Ascending aorta (tissue), 2 donors: ENCODE measurements at regions of chr5 and their contacts with region 1.

Region 1: DNA sequence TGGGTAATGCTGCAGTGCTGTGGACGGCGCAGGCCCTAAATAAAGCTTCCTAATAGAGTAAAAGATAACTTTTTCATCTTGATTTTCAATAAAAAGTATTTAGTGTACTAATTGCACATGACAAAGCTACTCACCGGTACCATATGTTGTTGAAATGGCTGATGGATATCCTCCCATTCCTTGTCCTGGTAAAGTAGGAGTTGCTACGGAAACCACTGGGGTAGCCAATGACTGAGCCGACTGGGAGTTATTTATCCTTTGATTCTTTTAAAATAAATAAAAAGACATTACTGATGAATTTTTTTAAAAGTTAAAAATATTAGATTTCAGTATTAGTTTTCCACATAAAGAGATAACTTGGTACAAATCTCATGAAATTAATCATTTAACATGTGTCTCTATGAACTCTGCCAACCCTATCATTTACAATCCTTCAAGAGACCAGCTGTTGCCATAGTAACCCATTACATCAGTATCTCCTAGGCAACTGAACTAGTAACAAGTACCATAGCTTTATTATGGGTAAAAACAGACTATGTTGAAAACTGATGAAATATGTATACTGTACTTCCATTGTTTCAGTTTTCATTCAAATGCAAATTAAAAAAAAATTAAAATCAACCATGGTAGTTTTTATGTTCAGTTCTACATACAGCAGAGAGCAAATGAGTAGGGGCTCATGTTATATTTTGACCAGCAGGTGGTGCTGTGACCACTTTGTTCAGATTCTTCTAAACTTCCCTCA is 153.7 kb downstream of the MEF2C start:
- DNase-seq: peak in 1 of 2 donors; percentile 86
- H3K4me3 ChIP-seq: no peak overlapping the region
- H3K27ac ChIP-seq: peak overlapping the region in 1 of 2 donors; percentile 82
- H3K4me1 ChIP-seq: peaks cover 11 to 35% of the 10 kb centered on the region in 2 donors
- H3K27me3 ChIP-seq: no peaks in the 10 kb centered on the region
- CTCF ChIP-seq: peak; percentile 61 to 74 (median 70)

Region 2: DNA sequence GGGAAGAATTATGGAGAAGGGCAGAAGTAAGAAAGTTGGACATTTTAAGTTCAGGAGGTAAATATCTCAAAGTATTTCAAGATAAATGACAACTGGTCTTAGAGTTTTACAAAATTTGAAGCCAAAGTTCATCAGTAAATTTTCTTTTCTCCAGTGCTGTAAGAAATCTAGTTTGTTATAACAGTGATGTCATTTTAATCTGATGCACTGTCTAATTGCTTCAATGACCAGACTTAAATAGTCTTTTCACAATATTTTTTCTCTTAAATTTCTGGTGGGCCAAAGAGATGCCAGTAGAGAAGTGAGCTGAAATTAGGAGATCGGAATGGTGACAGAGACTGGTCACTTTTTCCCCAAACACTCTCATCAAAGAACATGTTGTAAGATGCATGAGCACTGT is 304.1 kb before region 1 on chr5:
- intact Hi-C with region 1: no loop called
- DNase-seq: no peak
- H3K4me3 ChIP-seq: no peak overlapping the region
- H3K27ac ChIP-seq: no peak overlapping the region
- H3K4me1 ChIP-seq: no peaks in the 10 kb centered on the region
- H3K27me3 ChIP-seq: no peaks in the 10 kb centered on the region
- CTCF ChIP-seq: no peak

Region 3: GRCh38 chr5:88785391-88786219 is 56.3 kb after region 1 on chr5:
- intact Hi-C with region 1: loop called (anchors 5 kb)
- DNase-seq: peak in 1 of 2 donors; percentile 83
- H3K4me3 ChIP-seq: peak overlapping the region; percentile 29 to 50
- H3K27ac ChIP-seq: peak overlapping the region; percentile 84 to 90
- H3K4me1 ChIP-seq: peaks cover 10 to 27% of the 10 kb centered on the region in 2 donors
- H3K27me3 ChIP-seq: no peaks in the 10 kb centered on the region
- CTCF ChIP-seq: no peak

Region 4: GRCh38 chr5:88890070-88890781 is 161.0 kb after region 1 on chr5:
- intact Hi-C with region 1: no loop called
- DNase-seq: no peak
- H3K4me3 ChIP-seq: peak overlapping the region; percentile 72 to 83
- H3K27ac ChIP-seq: peak overlapping the region; percentile 90 to 95
- H3K4me1 ChIP-seq: peaks cover 0 to 7% of the 10 kb centered on the region in 2 donors
- H3K27me3 ChIP-seq: no peaks in the 10 kb centered on the region
- CTCF ChIP-seq: no peak

Region 5: DNA sequence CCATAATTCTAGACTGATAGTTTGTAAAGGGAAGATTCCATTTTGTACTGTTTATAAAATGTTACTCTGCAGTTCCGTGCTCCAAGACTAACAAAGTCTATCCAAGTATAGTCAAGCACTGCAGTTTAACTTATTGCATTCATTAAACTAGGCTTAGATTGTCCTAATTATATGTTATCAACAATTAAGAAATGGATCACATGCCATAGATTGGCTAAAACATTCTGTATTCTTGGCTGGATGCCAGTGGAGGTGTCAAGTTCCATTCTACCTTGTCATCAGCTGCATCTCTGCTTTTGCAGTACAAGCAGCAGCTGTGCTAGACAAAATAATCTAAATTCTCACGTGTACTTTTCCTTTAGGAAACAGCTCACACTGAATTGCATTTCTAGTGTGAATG is 223.1 kb after region 1 on chr5:
- intact Hi-C with region 1: loop called (anchors 5 kb)
- DNase-seq: no peak
- H3K4me3 ChIP-seq: peak overlapping the region in 1 of 2 donors; percentile 13
- H3K27ac ChIP-seq: peak overlapping the region; percentile 31 to 58
- H3K4me1 ChIP-seq: peaks cover 4 to 21% of the 10 kb centered on the region in 2 donors
- H3K27me3 ChIP-seq: no peaks in the 10 kb centered on the region
- CTCF ChIP-seq: no peak

Region 6: DNA sequence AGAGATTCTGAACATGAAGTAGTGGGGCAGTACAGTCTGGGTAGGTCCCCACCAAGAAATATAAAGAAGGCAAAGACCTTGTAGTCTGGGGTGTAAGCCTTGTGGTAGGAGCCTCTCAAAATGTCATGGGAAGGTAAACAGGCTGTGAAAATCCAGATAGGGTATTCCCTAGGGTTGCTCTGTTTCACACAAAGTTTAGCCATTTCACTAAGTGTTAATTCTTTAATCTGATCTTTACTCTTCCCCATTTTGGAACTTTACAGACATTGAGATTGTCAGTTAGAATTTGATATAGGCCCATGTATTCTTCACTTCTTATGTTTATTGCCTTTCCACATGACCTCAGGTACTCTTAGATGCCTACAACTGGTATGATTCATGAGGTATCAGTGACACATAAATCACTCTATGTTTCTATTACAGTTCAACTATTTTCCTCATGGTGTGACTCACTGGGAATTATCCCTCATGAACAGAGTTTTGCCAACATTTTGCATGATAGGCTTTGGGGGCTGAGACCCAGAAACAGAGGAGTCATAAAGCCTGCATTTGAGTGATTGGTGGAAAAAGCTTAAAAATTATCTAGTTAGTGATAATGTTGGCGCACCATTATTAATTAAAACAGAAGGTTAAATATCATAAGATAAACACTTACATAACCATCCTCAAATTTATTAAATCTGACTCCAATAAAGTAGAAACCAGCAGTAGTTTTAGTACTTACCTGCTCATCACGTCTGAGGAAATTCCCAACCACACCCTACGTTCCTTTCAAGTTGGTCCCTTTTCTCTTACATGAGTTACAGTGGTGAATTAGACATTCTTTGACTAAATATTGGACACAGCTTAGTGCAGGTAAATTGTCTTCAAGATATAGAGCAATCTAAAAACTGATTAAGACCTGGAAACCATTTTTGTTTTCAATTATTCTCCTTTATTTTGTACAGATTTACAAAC is 553.6 kb after region 1 on chr5:
- intact Hi-C with region 1: loop called (anchors 10 kb)
- DNase-seq: no peak
- H3K4me3 ChIP-seq: no peak overlapping the region
- H3K27ac ChIP-seq: no peak overlapping the region
- H3K4me1 ChIP-seq: peaks cover 0 to 14% of the 10 kb centered on the region in 2 donors
- H3K27me3 ChIP-seq: no peaks in the 10 kb centered on the region
- CTCF ChIP-seq: no peak

Region 7: DNA sequence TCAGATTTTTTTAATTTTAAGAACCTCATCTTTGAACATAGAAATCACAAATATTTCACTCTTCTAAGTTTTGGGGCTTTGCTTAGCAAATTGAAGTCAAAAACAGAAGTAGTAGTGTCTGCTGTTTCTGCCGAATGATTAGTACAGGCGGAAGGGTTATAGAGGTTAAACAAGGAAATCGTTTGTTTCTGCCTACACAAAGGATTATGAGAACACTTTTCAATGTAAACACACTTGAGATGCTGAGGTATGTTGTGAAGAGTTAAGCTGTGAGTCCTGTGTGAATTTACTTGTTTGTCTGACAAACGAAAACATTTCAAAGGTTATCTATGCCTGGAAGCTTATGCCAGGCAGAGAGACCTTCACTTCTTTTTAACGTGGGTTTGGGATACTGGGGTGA is 1455.5 kb after region 1 on chr5:
- intact Hi-C with region 1: loop called (anchors 5 kb)
- DNase-seq: no peak
- H3K4me3 ChIP-seq: no peak overlapping the region
- H3K27ac ChIP-seq: no peak overlapping the region
- H3K4me1 ChIP-seq: peaks cover 0 to 3% of the 10 kb centered on the region in 2 donors
- H3K27me3 ChIP-seq: no peaks in the 10 kb centered on the region
- CTCF ChIP-seq: no peak